ENCODE measurements at regions of chr3 and their contacts with region 1.

Region 1: DNA sequence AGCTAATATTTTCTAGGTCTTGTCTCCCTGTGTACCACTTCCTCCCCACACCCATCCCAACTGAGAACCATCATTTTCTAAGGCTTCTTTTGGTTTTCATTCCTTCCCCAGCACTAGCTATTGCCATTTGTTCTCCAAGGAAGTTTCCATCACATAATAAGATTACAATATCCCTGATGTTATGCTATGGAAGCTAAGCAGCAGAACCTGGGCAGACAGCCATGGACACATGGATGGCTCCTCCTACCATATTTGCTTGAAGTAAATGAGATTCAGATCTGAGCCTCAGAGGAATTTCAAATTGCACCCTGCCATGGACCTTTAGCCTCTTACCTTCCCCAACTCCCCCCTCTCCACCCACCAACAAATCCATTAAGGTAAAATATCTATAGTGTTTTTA is 31.5 kb downstream of the GASK1A start:
- DNase-seq: no peak
- H3K4me3 ChIP-seq: no peak overlapping the region
- H3K27ac ChIP-seq: no peak overlapping the region
- H3K4me1 ChIP-seq: no peaks in the 10 kb centered on the region; a peak in 1 of 7 replicates
- H3K27me3 ChIP-seq: no peaks in the 10 kb centered on the region
- CTCF ChIP-seq: no peak
- EP300 ChIP-seq: no peak
- POLR2A ChIP-seq: no peak
- RAD21 ChIP-seq: no peak

Region 2: GRCh38 chr3:43024181-43024885 is 13.7 kb after region 1 on chr3:
- CTCF ChIA-PET with region 1: interaction called, 11 read pairs
- POLR2A ChIA-PET with region 1: interaction called, 4 read pairs
- DNase-seq: no peak
- H3K4me3 ChIP-seq: no peak overlapping the region
- H3K27ac ChIP-seq: no peak overlapping the region
- H3K4me1 ChIP-seq: peaks cover 0 to 5% (median 2%) of the 10 kb centered on the region in 4 experiments; a peak in 2 of 7 replicates
- H3K27me3 ChIP-seq: no peaks in the 10 kb centered on the region
- CTCF ChIP-seq: no peak
- EP300 ChIP-seq: no peak
- POLR2A ChIP-seq: no peak
- RAD21 ChIP-seq: no peak

Region 3: GRCh38 chr3:43035801-43036365 is 25.2 kb after region 1 on chr3:
- CTCF ChIA-PET with region 1: interaction called, 11 read pairs
- POLR2A ChIA-PET with region 1: no interaction called
- DNase-seq: no peak
- H3K4me3 ChIP-seq: no peak overlapping the region
- H3K27ac ChIP-seq: no peak overlapping the region
- H3K4me1 ChIP-seq: no peaks in the 10 kb centered on the region
- H3K27me3 ChIP-seq: no peaks in the 10 kb centered on the region
- CTCF ChIP-seq: no peak
- EP300 ChIP-seq: no peak
- POLR2A ChIP-seq: no peak
- RAD21 ChIP-seq: no peak